CD8-positive, alpha-beta memory T cell (primary cell): ENCODE measurements at regions of chr12 and their contacts with region 1.

Region 1: GRCh38 chr12:113221181-113221997 is at the start of gene TPCN1:
- DNase-seq: peak; percentile 98 to 99 (median 98)
- H3K4me3 ChIP-seq: peak within 1 kb of the TSS; percentile 81
- H3K4me3 Mint-ChIP-seq: peak within 1 kb of the TSS; percentile 84 to 93 (median 87)
- H3K27ac ChIP-seq: peak within 1 kb of the TSS; percentile 79
- H3K27ac Mint-ChIP-seq: peak within 1 kb of the TSS; percentile 78 to 94 (median 91)
- H3K4me1 ChIP-seq: peaks cover 38% of the 10 kb centered on the region
- H3K4me1 Mint-ChIP-seq: peaks cover 26 to 39% (median 34%) of the 10 kb centered on the region in 3 donors
- H3K27me3 ChIP-seq: no peaks in the 10 kb centered on the region
- H3K27me3 Mint-ChIP-seq: no peaks in the 10 kb centered on the region
- total RNA-seq, gene TPCN1: 21.3 to 24.1 TPM

Region 2: GRCh38 chr12:113103756-113104450 is 117.5 kb before region 1 on chr12:
- CTCF ChIA-PET with region 1: no interaction called
- POLR2A ChIA-PET with region 1: no interaction called
- DNase-seq: peak; percentile 36 to 75 (median 56)
- H3K4me3 ChIP-seq: peak overlapping the region; percentile 47
- H3K4me3 Mint-ChIP-seq: peak overlapping the region; percentile 72 to 88 (median 80)
- H3K27ac ChIP-seq: no peak overlapping the region
- H3K27ac Mint-ChIP-seq: peak overlapping the region in 6 of 8 donors; percentile 38 to 83 (median 72)
- H3K4me1 ChIP-seq: peaks cover 4% of the 10 kb centered on the region
- H3K4me1 Mint-ChIP-seq: peaks cover 5 to 16% (median 8%) of the 10 kb centered on the region in 3 donors
- H3K27me3 ChIP-seq: no peaks in the 10 kb centered on the region
- H3K27me3 Mint-ChIP-seq: peaks cover 0 to 3% of the 10 kb centered on the region in 2 donors

Region 3: GRCh38 chr12:113184900-113185773 is 36.3 kb before region 1 on chr12 and contains the starts of genes DDX54 and RITA1:
- CTCF ChIA-PET with region 1: interaction called, 4 read pairs
- POLR2A ChIA-PET with region 1: interaction called, 11 read pairs
- DNase-seq: peak; percentile 82 to 92 (median 89)
- H3K4me3 ChIP-seq: peak within 1 kb of the TSS; percentile 85
- H3K4me3 Mint-ChIP-seq: peak within 1 kb of the TSS; percentile 94 to 100 (median 96)
- H3K27ac ChIP-seq: peak within 1 kb of the TSS; percentile 89
- H3K27ac Mint-ChIP-seq: peak within 1 kb of the TSS; percentile 96 to 99 (median 97)
- H3K4me1 ChIP-seq: peaks cover 31% of the 10 kb centered on the region
- H3K4me1 Mint-ChIP-seq: peaks cover 28 to 51% (median 49%) of the 10 kb centered on the region in 3 donors
- H3K27me3 ChIP-seq: no peaks in the 10 kb centered on the region
- H3K27me3 Mint-ChIP-seq: no peaks in the 10 kb centered on the region
- total RNA-seq, gene DDX54: 131 to 133 TPM
- total RNA-seq, gene RITA1: 21.1 to 22.5 TPM

Region 4: DNA sequence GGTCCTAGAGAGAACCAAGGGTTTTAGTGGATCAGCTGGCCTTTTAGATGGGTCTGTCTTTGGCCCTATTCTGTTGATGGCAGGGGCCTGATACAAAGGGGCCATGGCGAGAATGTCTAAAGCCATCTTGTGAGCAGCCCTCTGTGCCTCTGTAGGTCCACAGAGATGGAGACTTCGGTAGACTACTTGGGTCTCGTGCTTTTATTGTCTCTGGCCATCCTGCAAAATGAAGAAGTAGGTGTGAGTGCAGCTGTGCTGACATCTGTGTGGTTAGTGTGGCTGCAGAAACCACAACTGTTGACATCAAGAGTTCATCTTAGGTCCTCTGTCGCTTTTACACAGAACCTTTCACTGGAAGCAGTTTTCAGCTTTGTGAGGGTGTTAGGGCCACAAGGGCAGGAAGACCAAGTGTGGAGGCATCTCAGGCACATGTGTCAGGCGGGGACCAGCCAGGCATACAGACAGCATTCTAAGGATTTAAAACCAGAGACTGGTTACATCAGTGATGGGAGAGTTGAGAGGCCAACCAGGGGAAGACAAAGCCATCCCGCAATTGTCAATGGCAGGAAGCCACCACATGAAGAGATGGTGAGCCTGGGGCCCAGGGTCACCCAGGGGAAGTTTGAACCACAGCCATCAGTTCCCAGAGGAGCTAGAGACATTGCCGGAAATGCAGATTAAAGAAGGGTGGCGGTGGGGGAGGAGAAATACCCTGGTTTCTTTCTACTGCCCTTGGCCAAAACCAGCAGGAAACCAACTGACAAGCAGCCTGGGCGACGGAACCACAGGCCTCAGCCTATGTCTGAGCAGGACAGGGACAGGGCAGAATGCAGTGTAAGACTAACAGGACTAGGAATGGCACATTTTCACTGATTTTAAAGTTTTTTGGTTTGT is 13.1 kb before region 1 on chr12:
- CTCF ChIA-PET with region 1: interaction called, 22 read pairs
- POLR2A ChIA-PET with region 1: interaction called, 11 read pairs
- DNase-seq: peak; percentile 44 to 82 (median 69)
- H3K4me3 ChIP-seq: peak overlapping the region; percentile 20
- H3K4me3 Mint-ChIP-seq: peak overlapping the region; percentile 7 to 89 (median 79)
- H3K27ac ChIP-seq: peak overlapping the region; percentile 44
- H3K27ac Mint-ChIP-seq: peak overlapping the region; percentile 82 to 97 (median 94)
- H3K4me1 ChIP-seq: peaks cover 45% of the 10 kb centered on the region
- H3K4me1 Mint-ChIP-seq: peaks cover 33 to 51% (median 42%) of the 10 kb centered on the region in 3 donors
- H3K27me3 ChIP-seq: no peaks in the 10 kb centered on the region
- H3K27me3 Mint-ChIP-seq: no peaks in the 10 kb centered on the region

Region 5: GRCh38 chr12:113325916-113326315 is 104.5 kb after region 1 on chr12:
- CTCF ChIA-PET with region 1: no interaction called
- POLR2A ChIA-PET with region 1: no interaction called
- DNase-seq: no peak
- H3K4me3 ChIP-seq: no peak overlapping the region
- H3K4me3 Mint-ChIP-seq: no peak overlapping the region
- H3K27ac ChIP-seq: no peak overlapping the region
- H3K27ac Mint-ChIP-seq: no peak overlapping the region
- H3K4me1 ChIP-seq: no peaks in the 10 kb centered on the region
- H3K4me1 Mint-ChIP-seq: peaks cover 7 to 45% (median 16%) of the 10 kb centered on the region in 3 donors
- H3K27me3 ChIP-seq: no peaks in the 10 kb centered on the region
- H3K27me3 Mint-ChIP-seq: no peaks in the 10 kb centered on the region